ENCODE measurements at regions of chr1 and their contacts with region 1.

Region 1: DNA sequence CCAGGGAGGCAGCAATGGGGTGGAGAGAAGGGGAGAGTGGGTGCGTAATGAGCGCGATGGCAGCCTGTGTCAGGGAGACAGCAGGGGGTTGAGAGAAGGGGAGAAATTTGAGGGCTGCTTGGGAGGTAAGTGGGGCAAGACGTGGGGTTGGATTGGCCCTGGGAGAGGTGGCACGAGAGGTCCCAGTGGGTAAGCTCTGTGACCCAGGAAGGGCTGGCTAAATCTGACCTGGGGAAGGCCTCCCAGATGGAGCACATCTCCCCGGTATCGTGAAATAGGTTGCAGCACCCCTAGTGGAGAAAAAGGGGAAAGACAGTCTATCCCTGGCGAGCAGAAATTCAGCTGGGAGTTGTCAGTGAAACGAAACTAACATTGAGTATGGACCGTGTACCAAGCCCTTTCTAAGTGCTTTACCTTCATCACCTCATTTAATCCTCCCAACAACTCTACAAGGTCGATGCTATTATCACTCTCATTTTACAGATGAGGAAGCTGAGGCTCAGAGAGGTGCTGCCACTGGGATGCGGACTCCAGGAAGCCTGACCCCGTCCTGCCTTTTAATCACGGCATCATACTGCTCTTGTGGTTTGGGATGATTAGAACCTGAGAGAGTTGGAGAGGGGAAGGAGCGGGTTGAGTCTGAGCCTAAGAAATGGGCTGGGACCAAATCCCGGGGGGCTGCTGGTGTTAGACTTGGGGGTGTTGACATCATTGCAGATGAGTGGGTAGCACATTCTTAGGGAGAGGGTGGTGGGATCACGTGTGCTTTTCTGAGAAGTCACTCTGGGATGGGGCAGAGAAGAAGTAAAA is 56.6 kb upstream of the RPL11 start:
- DNase-seq: peak; percentile 78
- ATAC-seq: peak; percentile 87
- H3K4me3 Mint-ChIP-seq: peak overlapping the region; percentile 48
- H3K27ac Mint-ChIP-seq: peak overlapping the region; percentile 54
- H3K4me1 Mint-ChIP-seq: peaks cover 19% of the 10 kb centered on the region
- H3K27me3 Mint-ChIP-seq: no peaks in the 10 kb centered on the region

Region 2: DNA sequence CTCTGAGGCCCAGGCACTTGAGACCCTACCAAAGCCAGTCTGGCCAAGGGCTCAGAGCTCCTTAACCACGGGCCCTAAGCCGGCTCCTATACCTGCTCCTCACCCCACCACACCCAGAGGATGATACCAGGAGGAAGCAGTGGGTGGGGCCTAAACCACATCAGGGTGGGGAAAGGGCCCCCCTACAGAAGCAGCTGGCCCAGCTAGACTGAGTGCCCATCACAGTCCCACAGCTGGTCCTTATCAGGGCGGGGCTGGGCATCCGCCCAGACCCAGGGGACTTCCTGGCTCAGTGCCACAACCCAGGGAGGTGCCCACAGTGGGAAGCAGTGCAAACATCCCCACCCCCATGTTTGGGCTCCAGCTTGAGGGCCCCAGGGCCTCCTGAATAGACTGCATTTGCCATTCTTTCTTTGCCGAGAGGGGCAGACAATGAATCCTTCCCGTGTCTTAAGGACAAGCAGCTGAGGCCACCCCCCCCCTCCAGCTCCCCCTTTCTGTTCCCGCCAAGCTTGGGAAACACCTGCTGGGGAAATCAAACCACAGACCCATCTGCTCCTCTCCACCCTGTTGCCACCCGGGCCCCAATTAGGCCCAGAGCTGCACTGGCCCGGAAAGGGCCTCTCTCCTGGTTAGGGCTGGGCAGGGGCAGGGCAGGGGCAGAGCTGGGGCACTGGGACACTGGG is 110.2 kb before region 1 on chr1:
- CTCF ChIA-PET with region 1: interaction called, 73 read pairs
- DNase-seq: peak; percentile 69
- ATAC-seq: peak; percentile 11
- H3K4me3 Mint-ChIP-seq: peak overlapping the region; percentile 71
- H3K27ac Mint-ChIP-seq: peak overlapping the region; percentile 85
- H3K4me1 Mint-ChIP-seq: peaks cover 69% of the 10 kb centered on the region
- H3K27me3 Mint-ChIP-seq: no peaks in the 10 kb centered on the region

Region 3: DNA sequence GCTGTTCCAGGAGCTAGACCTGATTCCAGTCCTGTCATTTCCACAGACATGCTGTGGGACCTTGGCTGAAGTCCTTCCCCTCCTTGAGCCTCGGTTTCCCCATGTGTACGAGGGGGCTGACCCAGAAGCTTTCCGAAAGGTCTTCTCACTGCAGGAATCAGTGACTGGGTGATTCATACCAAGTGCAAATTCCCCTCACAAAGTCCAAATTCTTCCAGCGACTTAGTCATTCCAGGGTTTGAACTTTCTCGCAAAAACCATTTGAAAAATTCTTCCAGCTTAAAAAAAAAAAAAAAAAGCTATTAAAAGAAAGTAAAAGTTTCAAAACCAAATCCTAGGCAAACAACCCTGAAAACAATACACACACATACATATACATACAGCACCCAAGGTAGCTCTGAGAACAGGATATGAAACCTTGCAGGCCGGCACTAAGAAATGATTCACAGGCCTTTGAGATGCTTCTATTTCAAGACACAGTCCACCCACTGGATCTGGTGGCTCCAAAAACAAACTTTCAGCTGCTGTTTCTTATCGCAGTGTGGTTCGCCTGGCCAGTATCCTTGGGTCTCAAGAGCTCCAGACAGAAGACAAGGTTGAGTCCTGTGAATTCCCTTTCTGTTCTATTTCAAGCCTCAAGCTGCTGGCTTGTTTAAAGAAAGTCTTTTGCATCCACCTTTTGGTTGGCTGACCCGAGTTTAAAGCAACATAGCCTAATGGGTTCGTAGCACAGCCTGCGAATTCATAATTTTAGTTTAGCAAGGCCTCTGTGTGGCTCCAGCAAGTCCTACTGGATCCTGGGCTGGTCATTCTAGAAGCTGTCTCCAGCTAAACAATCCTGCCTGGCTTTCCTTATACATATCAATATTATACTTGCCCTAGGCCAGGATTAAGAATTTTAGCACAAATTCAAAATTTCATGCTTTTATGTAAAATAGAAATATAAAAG is 57.7 kb before region 1 on chr1:
- CTCF ChIA-PET with region 1: interaction called, 71 read pairs
- DNase-seq: peak; percentile 72
- ATAC-seq: peak; percentile 95
- H3K4me3 Mint-ChIP-seq: peak overlapping the region; percentile 20
- H3K27ac Mint-ChIP-seq: peak overlapping the region; percentile 84
- H3K4me1 Mint-ChIP-seq: peaks cover 27% of the 10 kb centered on the region
- H3K27me3 Mint-ChIP-seq: no peaks in the 10 kb centered on the region

Region 4: GRCh38 chr1:23607947-23608346 is 27.1 kb before region 1 on chr1:
- CTCF ChIA-PET with region 1: interaction called, 87 read pairs
- DNase-seq: no peak
- ATAC-seq: no peak
- H3K4me3 Mint-ChIP-seq: no peak overlapping the region
- H3K27ac Mint-ChIP-seq: no peak overlapping the region
- H3K4me1 Mint-ChIP-seq: peaks cover 21% of the 10 kb centered on the region
- H3K27me3 Mint-ChIP-seq: no peaks in the 10 kb centered on the region

Region 5: DNA sequence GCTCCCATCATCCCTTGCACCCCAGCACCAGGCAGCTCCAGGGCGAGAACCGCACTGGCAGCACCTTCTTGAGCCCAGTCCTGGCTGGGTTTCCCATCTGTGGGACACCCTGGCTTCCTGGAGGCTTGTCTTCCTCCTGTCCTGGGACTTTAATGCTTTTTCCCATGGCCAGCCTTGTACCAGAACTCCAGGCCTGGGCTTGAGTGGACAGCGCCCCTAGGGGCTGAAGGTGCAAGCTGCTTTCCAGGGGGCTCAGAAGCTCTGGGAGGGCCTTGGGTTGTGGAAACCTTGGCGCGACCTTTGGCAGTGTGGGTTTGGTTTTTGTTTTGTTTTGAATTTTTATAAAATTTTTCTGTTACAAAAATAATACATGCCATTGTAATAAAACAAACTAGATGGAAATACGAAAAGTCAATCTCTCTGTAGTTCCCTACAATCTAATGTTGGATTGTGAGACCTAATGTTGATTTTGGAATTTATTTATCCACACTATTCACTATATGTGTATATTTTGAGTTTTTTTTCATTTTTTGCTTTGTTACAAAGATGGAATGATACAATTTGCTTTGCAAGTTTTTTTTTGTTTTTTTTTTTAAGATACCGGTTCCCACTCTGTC is 22.7 kb after region 1 on chr1:
- CTCF ChIA-PET with region 1: interaction called, 25 read pairs
- DNase-seq: peak; percentile 62
- ATAC-seq: peak; percentile 80
- H3K4me3 Mint-ChIP-seq: no peak overlapping the region
- H3K27ac Mint-ChIP-seq: no peak overlapping the region
- H3K4me1 Mint-ChIP-seq: no peaks in the 10 kb centered on the region
- H3K27me3 Mint-ChIP-seq: peaks cover 15% of the 10 kb centered on the region

Measured in activated CD8-positive, alpha-beta memory T cell treated with anti-CD3 and anti-CD28 coated beads, Interleukin-2, amount 10 ng/mL, durations not matched to agents 7 days and 5 days (primary cell).